ENCODE measurements at regions of chrX and their contacts with region 1.

Region 1: DNA sequence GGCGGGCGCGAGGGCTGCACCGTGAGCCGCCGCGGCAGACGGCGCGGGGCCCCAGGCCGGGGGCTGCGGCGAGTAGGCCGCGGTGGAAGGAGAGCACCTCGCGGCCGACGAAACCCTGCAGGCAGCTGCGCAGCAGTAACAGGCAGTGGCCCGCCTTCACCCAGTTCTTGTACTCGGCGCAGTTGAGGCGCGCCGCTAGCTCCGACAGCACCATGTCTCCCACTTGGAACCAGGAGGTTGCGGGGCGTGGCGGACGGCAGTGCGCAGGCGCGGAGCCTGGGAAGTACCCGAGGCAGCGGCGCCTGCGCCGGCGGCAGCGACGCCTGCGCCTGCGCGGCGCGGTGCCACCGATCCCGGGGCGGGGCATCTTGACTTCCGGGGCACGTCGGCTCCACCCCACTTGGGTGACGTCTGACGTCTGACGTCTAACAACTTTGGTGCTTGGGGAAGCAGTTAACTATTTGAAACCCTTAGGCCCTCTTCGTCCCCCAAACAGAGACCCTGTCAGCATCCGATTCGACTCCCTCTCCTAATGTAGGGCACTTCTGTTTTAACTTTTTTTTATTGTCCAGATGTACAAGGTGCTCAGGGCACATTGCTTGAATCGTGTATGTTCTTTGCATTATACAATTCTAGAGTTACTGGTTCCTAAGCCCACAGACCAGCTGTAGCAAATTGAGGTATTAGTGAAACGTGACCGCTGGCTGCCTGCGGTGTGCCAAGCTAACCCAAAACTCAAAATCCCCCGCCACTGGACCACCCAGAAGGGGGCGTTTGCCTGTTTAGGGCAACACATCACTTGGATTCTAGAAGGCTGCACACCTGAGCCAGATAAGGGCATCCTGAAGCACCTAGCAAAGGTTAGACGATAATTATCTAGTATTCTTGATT is at the start of gene CXorf38:
- DNase-seq: peak; percentile 88 to 95 (median 94)
- ATAC-seq: peak; percentile 76 to 93 (median 88)
- H3K4me3 ChIP-seq: peak within 1 kb of the TSS; percentile 70 to 98 (median 83)
- H3K27ac ChIP-seq: peak within 1 kb of the TSS; percentile 57 to 88 (median 84)
- H3K4me1 ChIP-seq: peaks cover 0 to 44% (median 18%) of the 10 kb centered on the region in 12 donors
- H3K27me3 ChIP-seq: peaks cover 0 to 3% (median 0%) of the 10 kb centered on the region in 9 donors
- CTCF ChIP-seq: no peak
- POLR2A ChIP-seq: peak in 1 of 2 donors; percentile 71
- total RNA-seq, gene CXorf38: 3.3 to 16.0 (median 6.0) TPM

Region 2: GRCh38 chrX:40539214-40540142 is 108.1 kb before region 1 on chrX:
- intact Hi-C with region 1: loop called in 2 of 10 experiments (anchors 5 kb)
- DNase-seq: peak in 4 of 5 donors; percentile 20 to 65 (median 53)
- ATAC-seq: peak; percentile 37 to 88 (median 76)
- H3K4me3 ChIP-seq: no peak overlapping the region
- H3K27ac ChIP-seq: peak overlapping the region in 4 of 12 donors; percentile 19 to 55 (median 26)
- H3K4me1 ChIP-seq: peaks cover 0 to 11% (median 0%) of the 10 kb centered on the region in 12 donors
- H3K27me3 ChIP-seq: peaks cover 0 to 65% (median 0%) of the 10 kb centered on the region in 9 donors
- CTCF ChIP-seq: peak in 1 of 12 donors; percentile 18
- POLR2A ChIP-seq: no peak

Region 3: GRCh38 chrX:40735325-40736169 is 88.0 kb after region 1 on chrX and contains the start of gene MED14:
- intact Hi-C with region 1: loop called in 2 of 10 experiments (anchors 2 to 10 kb)
- DNase-seq: peak; percentile 88 to 92 (median 89)
- ATAC-seq: peak; percentile 98 to 99 (median 98)
- H3K4me3 ChIP-seq: peak within 1 kb of the TSS; percentile 40 to 97 (median 80)
- H3K27ac ChIP-seq: peak within 1 kb of the TSS; percentile 91 to 100 (median 94)
- H3K4me1 ChIP-seq: peaks cover 0 to 28% (median 7%) of the 10 kb centered on the region in 12 donors
- H3K27me3 ChIP-seq: peaks cover 0 to 50% (median 0%) of the 10 kb centered on the region in 9 donors
- CTCF ChIP-seq: peak; percentile 35 to 61 (median 42)
- POLR2A ChIP-seq: peak in 1 of 2 donors; percentile 38
- total RNA-seq, gene MED14: 17.5 to 40.9 (median 27.4) TPM

Region 4: GRCh38 chrX:40867352-40867751 is 219.8 kb after region 1 on chrX:
- intact Hi-C with region 1: no loop called
- DNase-seq: peak in 2 of 5 donors; percentile 6 to 27
- ATAC-seq: peak; percentile 20 to 53 (median 46)
- H3K4me3 ChIP-seq: no peak overlapping the region
- H3K27ac ChIP-seq: peak overlapping the region in 9 of 12 donors; percentile 38 to 73 (median 53)
- H3K4me1 ChIP-seq: peaks cover 0 to 18% (median 7%) of the 10 kb centered on the region in 12 donors
- H3K27me3 ChIP-seq: peaks cover 0 to 16% (median 0%) of the 10 kb centered on the region in 9 donors
- CTCF ChIP-seq: no peak
- POLR2A ChIP-seq: no peak

Region 5: GRCh38 chrX:41010188-41010846 is 362.8 kb after region 1 on chrX:
- intact Hi-C with region 1: loop called in 1 of 10 experiments (anchors 10 kb)
- DNase-seq: peak; percentile 79 to 87 (median 86)
- ATAC-seq: peak; percentile 89 to 97 (median 96)
- H3K4me3 ChIP-seq: peak overlapping the region in 10 of 12 donors; percentile 20 to 52 (median 44)
- H3K27ac ChIP-seq: peak overlapping the region; percentile 63 to 94 (median 86)
- H3K4me1 ChIP-seq: peaks cover 0 to 21% (median 7%) of the 10 kb centered on the region in 12 donors
- H3K27me3 ChIP-seq: peaks cover 0 to 29% (median 0%) of the 10 kb centered on the region in 9 donors
- CTCF ChIP-seq: peak in 7 of 12 donors; percentile 14 to 39 (median 25)
- POLR2A ChIP-seq: no peak

Region 6: DNA sequence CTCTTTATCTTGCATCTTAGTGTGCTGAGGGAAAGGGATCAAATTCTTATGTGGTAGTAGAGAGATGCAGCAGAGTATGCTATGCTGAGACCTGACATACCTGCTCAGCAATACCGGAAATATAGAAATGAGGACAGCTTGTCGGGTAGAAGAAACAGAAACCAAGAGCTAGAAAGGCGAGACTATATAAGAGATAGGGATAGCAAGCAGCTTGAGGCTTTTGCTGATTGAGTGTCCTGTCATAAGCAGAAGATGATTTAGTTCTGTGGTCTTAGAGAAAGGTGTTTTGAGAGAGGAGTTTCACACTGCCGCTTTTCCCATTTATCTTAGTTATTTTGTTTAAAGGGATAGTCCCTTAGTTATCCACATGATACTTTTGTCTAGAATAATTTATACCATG is 469.4 kb after region 1 on chrX:
- intact Hi-C with region 1: loop called in 5 of 10 experiments (anchors 2 to 10 kb)
- DNase-seq: no peak
- ATAC-seq: peak in 1 of 4 donors; percentile 44
- H3K4me3 ChIP-seq: no peak overlapping the region
- H3K27ac ChIP-seq: no peak overlapping the region
- H3K4me1 ChIP-seq: peaks cover 0 to 79% (median 19%) of the 10 kb centered on the region in 12 donors
- H3K27me3 ChIP-seq: no peaks in the 10 kb centered on the region
- CTCF ChIP-seq: no peak
- POLR2A ChIP-seq: no peak

Measured in heart left ventricle (tissue), 16 donors.